ENCODE measurements at regions of chr17 and their contacts with region 1.

Region 1: DNA sequence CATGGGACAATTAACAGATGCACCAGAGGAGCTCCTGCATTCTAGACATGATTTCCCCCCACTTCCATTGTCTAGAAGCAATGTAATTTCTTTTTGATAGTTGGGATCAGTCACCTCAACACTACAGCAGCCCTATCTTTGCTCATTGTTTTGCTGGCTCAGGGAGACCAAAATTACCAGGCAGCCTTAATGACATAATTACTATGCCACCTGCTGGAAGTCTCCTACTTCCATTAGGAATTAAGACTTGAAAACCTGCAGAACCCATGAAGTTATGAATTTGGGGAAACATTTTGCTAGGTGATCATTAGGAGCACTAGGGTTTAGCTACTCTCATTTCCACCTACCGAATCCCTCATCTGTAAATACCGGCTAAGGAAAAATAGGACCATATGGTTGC is 312.0 kb upstream of the CA10 start:
- DNase-seq: no peak
- H3K4me3 ChIP-seq: no peak overlapping the region
- H3K27ac ChIP-seq: no peak overlapping the region
- H3K4me1 ChIP-seq: no peaks in the 10 kb centered on the region
- H3K27me3 ChIP-seq: no peaks in the 10 kb centered on the region
- CTCF ChIP-seq: no peak

Region 2: DNA sequence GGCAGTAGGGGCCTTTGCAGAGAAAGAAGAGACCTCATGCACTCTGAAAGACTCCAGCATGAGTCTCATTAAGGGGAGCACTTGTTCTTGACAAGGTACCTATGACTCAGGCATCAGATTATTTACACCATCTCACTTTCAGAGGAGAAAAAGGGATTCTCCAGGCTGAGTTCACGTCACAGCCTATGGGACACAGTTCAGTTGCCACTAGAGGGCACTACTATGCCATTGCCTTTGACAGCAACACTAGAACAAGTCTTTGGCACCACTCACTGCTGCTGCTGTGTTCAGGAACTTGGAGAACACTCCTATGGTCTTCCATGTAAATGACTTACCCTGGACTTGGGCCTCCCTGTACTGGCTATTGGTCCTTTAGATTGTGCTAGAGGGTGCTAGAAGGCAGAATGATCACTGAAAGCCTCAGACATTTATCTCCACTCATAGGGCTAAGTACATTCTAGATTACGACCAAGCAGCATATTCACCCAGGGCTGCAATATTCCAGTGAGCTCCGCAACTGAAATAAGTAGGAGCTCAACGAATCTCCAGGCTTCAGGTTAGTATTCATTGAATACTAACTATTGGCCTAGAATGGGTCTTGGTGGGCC is 87.0 kb before region 1 on chr17:
- intact Hi-C with region 1: loop called (anchors 5 kb)
- DNase-seq: peak; percentile 77
- H3K4me3 ChIP-seq: no peak overlapping the region
- H3K27ac ChIP-seq: no peak overlapping the region
- H3K4me1 ChIP-seq: no peaks in the 10 kb centered on the region
- H3K27me3 ChIP-seq: no peaks in the 10 kb centered on the region
- CTCF ChIP-seq: peak; percentile 66

Region 3: GRCh38 chr17:52776234-52776633 is 305.7 kb after region 1 on chr17:
- intact Hi-C with region 1: no loop called
- DNase-seq: no peak
- H3K4me3 ChIP-seq: no peak overlapping the region
- H3K27ac ChIP-seq: no peak overlapping the region
- H3K4me1 ChIP-seq: no peaks in the 10 kb centered on the region
- H3K27me3 ChIP-seq: no peaks in the 10 kb centered on the region
- CTCF ChIP-seq: no peak

Measured in colonic mucosa (tissue), 4 donors.